ENCODE measurements at regions of chr13 and their contacts with region 1.

Region 1: GRCh38 chr13:106917673-106918556 is 350.0 kb upstream of the ARGLU1 start:
- DNase-seq: peak; percentile 59
- H3K4me3 ChIP-seq: peak overlapping the region; percentile 69 to 92 (median 71)
- H3K27ac ChIP-seq: peak overlapping the region; percentile 22
- H3K4me1 ChIP-seq: no peaks in the 10 kb centered on the region
- H3K27me3 ChIP-seq: no peaks in the 10 kb centered on the region
- CTCF ChIP-seq: peak; percentile 77 to 91

Region 2: DNA sequence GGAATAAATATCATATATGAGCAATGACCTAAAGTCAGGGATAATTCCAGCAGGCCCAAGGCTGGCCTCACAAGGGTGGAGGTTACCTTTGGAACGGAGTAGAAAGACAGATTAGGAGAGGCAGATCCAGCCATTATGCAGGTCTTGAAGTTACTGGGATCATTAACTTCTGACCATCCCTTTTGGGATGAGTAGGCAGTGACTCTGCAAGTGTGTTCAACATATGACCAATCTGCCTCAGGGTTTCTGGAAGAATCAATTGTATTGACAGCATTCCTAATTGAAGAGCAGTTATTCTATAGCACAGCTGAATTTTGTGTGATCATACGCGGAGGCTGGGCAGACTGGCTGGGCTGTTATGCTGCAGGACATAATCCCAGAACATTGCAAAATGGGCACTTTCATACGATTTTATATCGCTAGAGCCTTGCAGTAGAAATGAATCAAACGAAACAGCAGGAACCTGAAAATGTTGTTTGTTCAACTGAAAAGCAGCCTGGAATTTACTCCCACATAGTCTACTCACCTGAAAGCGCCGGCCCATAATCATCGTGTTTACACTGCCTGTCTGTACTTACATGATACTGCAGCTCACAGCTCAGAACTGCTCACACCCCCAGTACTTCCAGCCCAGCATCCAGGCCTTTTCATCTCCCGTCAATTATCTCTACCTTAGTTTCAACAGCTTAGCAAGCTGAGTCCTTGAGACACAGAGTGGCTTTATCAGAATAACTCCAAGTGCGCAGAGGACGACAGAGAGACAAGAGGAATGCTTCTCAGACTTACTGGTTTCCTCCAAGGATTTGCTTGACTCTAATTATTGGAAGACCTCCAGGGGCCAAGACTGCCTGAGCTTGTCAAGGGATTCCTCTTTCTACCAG is 938.5 kb before region 1 on chr13:
- CTCF ChIA-PET with region 1: no interaction called
- dilution Hi-C with region 1: no loop called
- in situ Hi-C with region 1: no loop called
- intact Hi-C with region 1: loop called (anchors 10 kb)
- DNase-seq: peak; percentile 85
- H3K4me3 ChIP-seq: peak overlapping the region; percentile 5 to 26 (median 14)
- H3K27ac ChIP-seq: peak overlapping the region; percentile 88
- H3K4me1 ChIP-seq: peaks cover 32% of the 10 kb centered on the region
- H3K27me3 ChIP-seq: no peaks in the 10 kb centered on the region
- CTCF ChIP-seq: no peak

Region 3: GRCh38 chr13:106619688-106620555 is 298.0 kb before region 1 on chr13:
- CTCF ChIA-PET with region 1: no interaction called
- dilution Hi-C with region 1: no loop called
- in situ Hi-C with region 1: no loop called
- intact Hi-C with region 1: loop called (anchors 1 kb)
- DNase-seq: peak; percentile 49
- H3K4me3 ChIP-seq: no peak overlapping the region
- H3K27ac ChIP-seq: no peak overlapping the region
- H3K4me1 ChIP-seq: no peaks in the 10 kb centered on the region
- H3K27me3 ChIP-seq: peaks cover 2% of the 10 kb centered on the region
- CTCF ChIP-seq: peak; percentile 82 to 89

Measured in mammary epithelial cell (primary cell).